ENCODE measurements at regions of chr1 and their contacts with region 1.

Region 1: DNA sequence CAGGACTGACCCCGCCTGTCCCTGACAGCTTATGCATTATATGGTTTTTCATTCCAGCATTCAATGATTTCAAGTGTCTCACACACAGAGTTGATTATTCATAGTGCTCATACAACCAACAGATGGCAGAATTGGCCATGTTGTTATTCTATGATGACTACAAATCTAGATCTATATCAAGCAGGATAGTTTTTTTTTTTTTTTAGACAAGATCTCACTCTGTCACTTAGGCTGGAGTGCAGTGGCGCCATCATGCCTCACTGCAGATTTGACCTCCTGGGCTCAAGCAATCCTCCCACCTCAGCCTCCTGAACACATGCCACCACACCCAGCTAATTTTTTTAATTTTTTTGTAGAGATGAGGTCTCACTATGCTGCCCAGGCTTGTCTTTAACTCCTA is 40.1 kb upstream of the LRRC8D start:
- DNase-seq: peak; percentile 56 to 69
- ATAC-seq: peak; percentile 90 to 98
- H3K4me3 ChIP-seq: no peak overlapping the region
- H3K27ac ChIP-seq: no peak overlapping the region
- H3K4me1 ChIP-seq: peaks cover 6% of the 10 kb centered on the region; the same call in 1 of the 3 replicates
- CTCF ChIP-seq: peak; percentile 55
- EP300 ChIP-seq: no peak
- POLR2A ChIP-seq: no peak
- RAD21 ChIP-seq: peak; percentile 67 to 74

Region 2: GRCh38 chr1:89791064-89791726 is 10.5 kb after region 1 on chr1:
- CTCF ChIA-PET with region 1: interaction called, 14 read pairs
- POLR2A ChIA-PET with region 1: no interaction called
- DNase-seq: no peak
- ATAC-seq: no peak
- H3K4me3 ChIP-seq: no peak overlapping the region
- H3K27ac ChIP-seq: no peak overlapping the region
- H3K4me1 ChIP-seq: no peaks in the 10 kb centered on the region
- CTCF ChIP-seq: no peak
- EP300 ChIP-seq: no peak
- POLR2A ChIP-seq: no peak
- RAD21 ChIP-seq: no peak